CD8-positive, alpha-beta T cell (primary cell): ENCODE measurements at regions of chr13 and their contacts with region 1.

Region 1: DNA sequence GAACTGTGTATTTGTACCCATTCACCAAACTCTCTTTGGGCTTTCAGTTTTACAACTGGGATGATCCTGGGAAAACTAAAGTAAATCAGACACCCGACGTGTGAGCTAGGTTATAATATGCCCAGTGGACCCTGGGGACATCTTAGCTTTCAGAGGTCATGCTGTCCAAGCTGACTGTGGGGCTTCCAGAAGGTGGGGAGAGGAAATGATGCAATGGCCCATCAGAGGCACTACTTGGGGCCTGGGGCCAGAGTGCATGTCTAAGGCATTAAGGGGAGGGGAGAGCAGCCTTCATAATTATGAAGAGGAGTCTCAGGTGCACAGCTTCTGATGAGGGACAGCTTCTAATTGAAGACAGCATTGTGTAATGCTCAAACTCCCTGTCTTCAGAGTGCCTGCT is 30.9 kb downstream of the ALOX5AP start:
- DNase-seq: no peak
- ATAC-seq: no peak
- H3K4me3 ChIP-seq: no peak overlapping the region
- H3K4me3 Mint-ChIP-seq: no peak overlapping the region
- H3K27ac ChIP-seq: no peak overlapping the region
- H3K27ac Mint-ChIP-seq: peak overlapping the region; percentile 61
- H3K4me1 ChIP-seq: no peaks in the 10 kb centered on the region
- H3K4me1 Mint-ChIP-seq: peaks cover 15% of the 10 kb centered on the region
- H3K27me3 ChIP-seq: no peaks in the 10 kb centered on the region
- H3K27me3 Mint-ChIP-seq: no peaks in the 10 kb centered on the region
- CTCF ChIP-seq: no peak

Region 2: DNA sequence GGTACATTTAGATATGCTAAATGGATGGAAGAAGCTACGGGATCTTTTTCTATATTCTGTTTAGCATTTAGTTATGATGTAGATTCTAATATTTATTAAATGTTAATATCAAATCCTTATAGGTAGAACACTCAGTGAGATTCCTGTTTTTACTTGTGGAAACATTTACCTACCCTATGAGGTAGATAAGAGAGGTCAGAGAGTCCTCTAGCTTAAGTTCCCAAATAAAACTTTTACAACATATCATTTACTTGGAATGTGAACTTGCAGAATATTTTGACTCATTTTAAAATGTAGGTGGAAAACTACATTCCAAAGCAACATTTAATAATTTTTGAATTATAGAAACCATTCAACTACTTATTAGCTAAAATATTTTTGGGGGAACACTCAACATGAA is 979.5 kb before region 1 on chr13:
- CTCF ChIA-PET with region 1: no interaction called
- POLR2A ChIA-PET with region 1: no interaction called
- intact Hi-C with region 1: loop called in 1 of 2 experiments (anchors 5 kb)
- DNase-seq: no peak
- ATAC-seq: no peak
- H3K4me3 ChIP-seq: no peak overlapping the region
- H3K4me3 Mint-ChIP-seq: no peak overlapping the region
- H3K27ac ChIP-seq: no peak overlapping the region
- H3K27ac Mint-ChIP-seq: no peak overlapping the region
- H3K4me1 ChIP-seq: peaks cover 6% of the 10 kb centered on the region
- H3K4me1 Mint-ChIP-seq: peaks cover 49% of the 10 kb centered on the region
- H3K27me3 ChIP-seq: no peaks in the 10 kb centered on the region
- H3K27me3 Mint-ChIP-seq: no peaks in the 10 kb centered on the region
- CTCF ChIP-seq: no peak

Region 3: DNA sequence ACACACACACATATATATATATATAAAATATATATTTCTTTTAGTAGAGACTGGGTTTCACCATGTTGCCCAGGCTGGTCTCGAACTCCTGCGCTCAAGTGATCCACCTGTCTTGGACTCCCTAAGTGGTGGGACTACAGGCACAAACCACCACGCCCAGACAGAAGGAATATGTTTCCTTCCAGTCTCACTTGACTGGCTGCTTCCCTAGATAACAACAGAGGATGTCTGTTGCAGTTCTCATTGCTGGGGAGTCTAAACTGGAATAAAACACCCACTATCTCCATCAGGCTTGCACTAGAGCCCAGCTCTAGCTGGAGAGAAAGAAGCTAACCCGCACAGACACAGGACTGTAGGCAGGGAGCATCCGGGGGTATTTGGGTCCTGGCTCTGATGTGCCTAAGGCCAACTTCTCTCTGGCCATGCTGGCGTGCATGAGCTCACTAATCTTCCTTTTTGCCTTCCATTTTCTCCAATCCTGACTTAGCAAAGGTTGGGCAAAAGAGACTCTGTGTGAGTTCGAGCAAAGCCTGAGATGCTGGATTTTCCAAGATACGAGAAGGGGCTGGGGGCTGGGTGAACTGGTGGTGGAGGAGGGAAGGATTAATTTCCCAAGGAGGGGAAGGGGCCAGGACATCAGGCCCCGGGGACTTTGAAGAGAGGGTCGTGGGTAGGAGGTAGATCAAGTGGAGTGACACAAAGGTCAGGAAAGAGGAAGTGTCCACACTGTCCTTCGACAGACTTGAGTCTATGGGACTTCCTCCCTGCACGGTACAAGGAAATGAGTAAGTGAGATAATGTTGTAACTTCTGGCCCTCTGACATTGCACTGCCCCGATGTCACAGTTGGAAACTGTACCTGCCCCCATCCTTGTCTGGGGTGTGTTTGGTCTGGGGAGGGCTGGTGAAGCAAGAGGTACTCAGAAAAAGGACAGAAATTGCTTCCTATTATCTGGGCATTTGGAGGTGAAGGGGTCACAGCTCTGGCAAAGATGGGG is 53.4 kb before region 1 on chr13:
- CTCF ChIA-PET with region 1: no interaction called
- POLR2A ChIA-PET with region 1: no interaction called
- intact Hi-C with region 1: no loop called
- DNase-seq: peak in 2 of 9 experiments; percentile 11 to 43
- ATAC-seq: peak; percentile 57
- H3K4me3 ChIP-seq: no peak overlapping the region
- H3K4me3 Mint-ChIP-seq: no peak overlapping the region
- H3K27ac ChIP-seq: no peak overlapping the region
- H3K27ac Mint-ChIP-seq: no peak overlapping the region
- H3K4me1 ChIP-seq: no peaks in the 10 kb centered on the region
- H3K4me1 Mint-ChIP-seq: peaks cover 3% of the 10 kb centered on the region
- H3K27me3 ChIP-seq: no peaks in the 10 kb centered on the region
- H3K27me3 Mint-ChIP-seq: no peaks in the 10 kb centered on the region
- CTCF ChIP-seq: no peak

Region 4: GRCh38 chr13:30785191-30785850 is 19.1 kb after region 1 on chr13:
- CTCF ChIA-PET with region 1: no interaction called
- POLR2A ChIA-PET with region 1: no interaction called
- intact Hi-C with region 1: no loop called
- DNase-seq: peak in 1 of 9 experiments; percentile 33
- ATAC-seq: no peak
- H3K4me3 ChIP-seq: no peak overlapping the region
- H3K4me3 Mint-ChIP-seq: no peak overlapping the region
- H3K27ac ChIP-seq: no peak overlapping the region
- H3K27ac Mint-ChIP-seq: no peak overlapping the region
- H3K4me1 ChIP-seq: no peaks in the 10 kb centered on the region
- H3K4me1 Mint-ChIP-seq: no peaks in the 10 kb centered on the region
- H3K27me3 ChIP-seq: no peaks in the 10 kb centered on the region
- H3K27me3 Mint-ChIP-seq: no peaks in the 10 kb centered on the region
- CTCF ChIP-seq: no peak